GM13976 (cell line): ENCODE measurements at regions of chr1 and their contacts with region 1.

Region 1: GRCh38 chr1:117534995-117535467 is 70.8 kb upstream of the TENT5C start:
- DNase-seq: peak; percentile 57
- CTCF ChIP-seq: peak; percentile 52

Region 2: DNA sequence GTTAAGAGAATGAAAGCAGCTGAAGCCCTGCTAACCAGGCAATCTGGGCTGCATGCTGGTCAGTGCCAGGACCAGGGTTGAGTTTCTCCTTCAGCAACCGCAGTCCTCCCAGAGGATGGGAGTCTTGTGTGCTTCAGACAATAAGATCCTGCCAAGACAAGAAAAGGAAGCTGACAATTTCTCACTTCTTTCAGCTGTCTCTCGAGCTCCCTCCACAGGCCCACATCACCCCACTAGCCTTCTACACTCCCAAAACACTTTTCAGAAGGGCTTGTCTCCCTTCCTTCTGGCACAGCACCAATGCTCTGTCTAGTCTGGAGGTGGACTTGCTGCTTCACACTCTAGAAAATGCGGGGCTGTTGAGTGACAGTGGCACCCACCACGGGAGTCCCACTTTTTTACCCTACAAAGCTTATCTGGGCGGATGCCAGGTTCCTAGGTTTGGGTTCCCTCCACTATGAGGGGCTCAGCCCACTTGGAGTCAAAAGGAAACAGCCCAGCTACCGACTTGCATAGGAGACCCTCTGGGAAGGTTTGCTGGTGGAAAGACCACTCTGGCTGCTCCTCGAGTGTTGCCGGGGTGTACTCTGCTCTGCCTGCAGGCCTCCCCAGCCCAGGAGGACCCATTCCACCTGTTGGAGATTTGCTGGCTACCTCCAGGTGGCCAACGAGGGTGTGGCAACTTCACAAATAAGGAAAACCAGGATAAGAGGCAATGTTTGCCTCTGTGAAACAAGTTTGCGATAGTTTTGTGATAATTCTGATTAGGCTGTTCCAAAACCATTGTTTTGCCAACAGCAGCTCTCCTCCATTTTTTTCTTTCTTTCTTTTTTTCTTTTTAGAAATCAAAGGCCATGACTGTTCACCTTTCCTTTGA is 139.7 kb after region 1 on chr1:
- in situ Hi-C with region 1: loop called (anchors 10 kb)
- DNase-seq: peak; percentile 76
- CTCF ChIP-seq: peak; percentile 43

Region 3: DNA sequence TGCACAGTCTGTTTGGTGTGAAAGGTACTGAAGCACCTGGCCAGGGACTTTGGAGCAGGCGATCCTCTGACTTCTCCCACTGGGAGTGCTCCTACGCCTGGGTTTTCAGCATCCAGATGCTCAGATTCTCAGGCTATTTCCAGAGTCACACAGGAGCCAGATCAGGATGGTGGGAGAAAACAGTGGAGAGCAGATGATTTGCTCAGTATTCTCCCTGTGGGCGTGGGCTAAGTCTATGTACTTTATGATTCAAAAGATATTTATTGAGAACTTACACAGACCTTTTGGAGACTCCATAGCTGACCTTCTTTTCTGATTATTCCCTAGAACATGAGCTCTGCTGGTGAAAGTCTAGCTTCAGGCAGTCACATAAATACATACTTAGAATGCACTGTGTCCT is 205.5 kb after region 1 on chr1:
- in situ Hi-C with region 1: loop called (anchors 10 kb)
- DNase-seq: no peak
- CTCF ChIP-seq: no peak